ENCODE measurements at regions of chr3 and their contacts with region 1.

Region 1: GRCh38 chr3:16177962-16178627 is 3.6 kb downstream of the GALNT15 start:
- DNase-seq: peak; percentile 79 to 92 (median 88)
- H3K4me3 ChIP-seq: peak overlapping the region; percentile 36 to 75 (median 57)
- H3K27ac ChIP-seq: peak overlapping the region in 53 of 59 donors; percentile 0 to 97 (median 72)
- H3K27me3 ChIP-seq: no peaks in the 10 kb centered on the region
- CTCF ChIP-seq: peak; percentile 88 to 99 (median 98)

Region 2: GRCh38 chr3:15601397-15602145 is 576.5 kb before region 1 on chr3 and contains the starts of genes BTD and HACL1:
- intact Hi-C with region 1: loop called in 1 of 2 experiments (anchors 10 kb)
- DNase-seq: peak; percentile 92 to 98 (median 97)
- H3K4me3 ChIP-seq: peak within 1 kb of the TSS; percentile 56 to 96 (median 86)
- H3K27ac ChIP-seq: peak within 1 kb of the TSS; percentile 71 to 98 (median 93)
- H3K27me3 ChIP-seq: no peaks in the 10 kb centered on the region
- CTCF ChIP-seq: peak in 49 of 56 donors; percentile 13 to 52 (median 34)
- total RNA-seq, gene BTD: 15.3 to 39.3 (median 24.9) TPM
- total RNA-seq, gene HACL1: 24.5 to 48.9 (median 35.2) TPM

Region 3: DNA sequence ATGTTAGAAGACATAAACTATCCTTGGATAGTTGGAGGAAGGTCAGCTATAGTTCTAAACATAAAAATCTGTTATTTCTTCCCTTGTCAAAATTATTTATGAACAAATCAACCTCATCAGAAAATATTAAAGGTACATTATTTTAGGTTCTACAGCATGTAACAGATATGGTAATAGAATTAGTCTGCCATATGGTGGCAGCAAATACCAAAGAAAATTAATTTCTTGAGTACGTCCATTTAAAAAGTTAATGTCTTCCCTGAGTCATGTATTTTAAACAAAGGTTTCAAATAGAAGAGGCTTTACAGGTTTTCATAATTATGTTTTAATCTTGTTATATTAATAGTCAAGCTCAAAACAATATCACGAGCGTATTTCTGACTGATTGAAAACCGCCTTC is 362.4 kb before region 1 on chr3:
- intact Hi-C with region 1: loop called (anchors 2 to 5 kb)
- DNase-seq: no peak
- H3K4me3 ChIP-seq: no peak overlapping the region
- H3K27ac ChIP-seq: peak overlapping the region in 11 of 59 donors; percentile 1 to 55 (median 26)
- H3K27me3 ChIP-seq: no peaks in the 10 kb centered on the region
- CTCF ChIP-seq: peak; percentile 18 to 83 (median 62)

Region 4: GRCh38 chr3:15933439-15934139 is 244.5 kb before region 1 on chr3:
- intact Hi-C with region 1: loop called in 1 of 2 experiments (anchors 10 kb)
- DNase-seq: peak in 6 of 10 donors; percentile 36 to 73 (median 52)
- H3K4me3 ChIP-seq: no peak overlapping the region
- H3K27ac ChIP-seq: peak overlapping the region; percentile 28 to 93 (median 84)
- H3K27me3 ChIP-seq: no peaks in the 10 kb centered on the region
- CTCF ChIP-seq: no peak

Region 5: GRCh38 chr3:16048435-16049318 is 129.4 kb before region 1 on chr3:
- intact Hi-C with region 1: loop called (anchors 1 to 2 kb)
- DNase-seq: peak in 5 of 10 donors; percentile 42 to 66 (median 63)
- H3K4me3 ChIP-seq: peak overlapping the region in 46 of 59 donors; percentile 4 to 55 (median 34)
- H3K27ac ChIP-seq: peak overlapping the region in 18 of 59 donors; percentile 7 to 68 (median 38)
- H3K27me3 ChIP-seq: no peaks in the 10 kb centered on the region
- CTCF ChIP-seq: peak; percentile 75 to 97 (median 90)

Region 6: GRCh38 chr3:16118407-16118806 is 59.7 kb before region 1 on chr3:
- intact Hi-C with region 1: loop called in 1 of 2 experiments (anchors 5 kb)
- DNase-seq: no peak
- H3K4me3 ChIP-seq: no peak overlapping the region
- H3K27ac ChIP-seq: no peak overlapping the region
- H3K27me3 ChIP-seq: no peaks in the 10 kb centered on the region
- CTCF ChIP-seq: no peak

Region 7: GRCh38 chr3:16247276-16248061 is 69.4 kb after region 1 on chr3:
- intact Hi-C with region 1: loop called (anchors 2 kb)
- DNase-seq: peak; percentile 59 to 91 (median 84)
- H3K4me3 ChIP-seq: peak overlapping the region in 5 of 59 donors; percentile 6 to 31 (median 22)
- H3K27ac ChIP-seq: peak overlapping the region in 2 of 59 donors; percentile 18 to 56
- H3K27me3 ChIP-seq: no peaks in the 10 kb centered on the region
- CTCF ChIP-seq: peak; percentile 89 to 100 (median 95)